ENCODE measurements at regions of chr22 and their contacts with region 1.

Region 1: GRCh38 chr22:33529424-33530113 is 390.7 kb downstream of the LARGE1 start:
- DNase-seq: peak; percentile 28
- ATAC-seq: peak; percentile 15 to 70

Region 2: GRCh38 chr22:33565580-33565995 is 36.0 kb after region 1 on chr22:
- intact Hi-C with region 1: loop called (anchors 5 to 10 kb)
- DNase-seq: peak; percentile 49
- ATAC-seq: peak; percentile 96 to 99